ENCODE measurements at regions of chr7 and their contacts with region 1.

Region 1: DNA sequence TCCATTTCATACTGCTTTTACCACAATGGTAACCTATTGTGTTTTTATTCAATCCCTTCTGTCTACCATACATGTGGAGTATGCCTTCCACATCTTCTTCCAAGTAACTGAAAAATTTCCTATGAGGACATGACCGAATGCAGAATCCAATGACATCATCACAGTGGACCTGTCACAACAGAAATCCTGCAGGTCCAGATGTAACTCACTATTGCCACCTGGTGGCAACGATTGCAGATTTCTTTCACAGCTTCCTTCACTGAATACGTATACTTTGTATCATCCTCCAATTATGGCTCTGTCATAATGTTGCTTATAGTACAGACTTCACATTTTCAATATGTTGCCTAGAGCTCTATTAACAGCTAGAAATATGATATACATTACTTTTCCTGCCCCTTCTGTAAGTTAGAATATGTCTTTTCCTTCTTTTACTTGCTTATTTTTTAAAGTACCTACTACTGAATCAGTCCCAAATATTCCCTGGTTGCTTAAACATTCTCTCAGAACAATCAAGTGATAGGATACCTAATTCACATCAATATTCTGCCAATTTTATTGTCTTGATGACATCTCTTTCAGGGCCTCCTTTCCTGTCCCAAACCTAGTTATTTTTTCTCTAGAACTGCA is 45.4 kb downstream of the SLC13A1 start:
- DNase-seq: peak; percentile 34 to 81
- H3K4me3 ChIP-seq: no peak overlapping the region
- H3K27ac ChIP-seq: no peak overlapping the region
- H3K4me1 ChIP-seq: 0 out of 7 replicates have a peak, but pooled peaks cover 0 to 1% (median 0%) of the 10 kb centered on the region in 4 experiments
- H3K27me3 ChIP-seq: no peaks in the 10 kb centered on the region
- CTCF ChIP-seq: peak; percentile 27 to 85 (median 74)
- EP300 ChIP-seq: no peak
- POLR2A ChIP-seq: no peak
- RAD21 ChIP-seq: peak; percentile 91

Region 2: DNA sequence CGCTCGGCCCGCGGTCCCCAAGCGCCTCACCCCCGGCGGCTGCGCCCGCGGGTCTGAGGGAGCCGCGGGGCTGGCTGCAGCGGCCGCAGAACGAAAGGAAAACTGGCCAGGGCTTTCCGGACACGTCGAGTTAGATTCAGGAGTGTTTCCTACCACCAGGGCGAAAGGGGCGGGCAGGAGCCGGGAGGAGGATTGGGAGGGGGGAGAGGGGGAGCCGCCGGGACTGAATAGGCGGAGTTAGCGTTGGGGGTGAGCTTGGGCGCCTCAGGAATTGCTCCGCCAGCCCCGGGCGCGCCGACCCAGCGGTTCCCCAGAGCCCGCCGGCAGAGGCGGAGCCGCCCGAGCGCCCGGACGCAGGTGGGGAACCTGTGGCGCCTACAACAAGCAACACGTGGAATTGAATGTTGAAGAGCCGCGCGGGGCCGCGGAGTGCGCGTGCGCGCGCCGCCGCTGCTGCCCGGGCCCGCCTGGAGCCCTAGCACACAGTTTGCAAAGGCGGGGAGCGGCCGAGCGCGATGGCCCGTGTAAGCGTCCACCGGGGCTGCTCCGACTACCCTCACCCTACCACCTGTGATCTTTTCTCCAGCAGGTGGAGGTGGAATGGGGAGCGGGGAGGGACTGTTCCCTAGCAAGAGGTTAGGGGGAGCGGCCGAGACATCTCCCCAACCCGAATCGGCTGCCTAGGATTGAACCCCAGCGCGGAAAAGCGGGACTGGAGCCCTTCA is 267.8 kb before region 1 on chr7 and contains the start of gene CADPS2:
- CTCF ChIA-PET with region 1: interaction called, 10 read pairs
- POLR2A ChIA-PET with region 1: no interaction called
- DNase-seq: peak; percentile 59 to 87
- H3K4me3 ChIP-seq: peak within 1 kb of the TSS; percentile 79 to 86 (median 84)
- H3K27ac ChIP-seq: no peak within 1 kb of the TSS
- H3K4me1 ChIP-seq: peaks cover 0 to 9% (median 3%) of the 10 kb centered on the region in 4 experiments; a peak in 6 of 7 replicates
- H3K27me3 ChIP-seq: peaks cover 3 to 15% (median 8%) of the 10 kb centered on the region in 4 experiments
- CTCF ChIP-seq: peak in 1 of 3 experiments; percentile 8; a peak in 1 of 4 replicates
- EP300 ChIP-seq: peak in 1 of 2 experiments; percentile 23; a peak in 1 of 3 replicates
- POLR2A ChIP-seq: no peak; a peak in 2 of 3 replicates
- RAD21 ChIP-seq: no peak; a peak in 1 of 4 replicates
- total RNA-seq, gene CADPS2: 19.7 and 22.3 TPM in 2 replicates

Region 3: DNA sequence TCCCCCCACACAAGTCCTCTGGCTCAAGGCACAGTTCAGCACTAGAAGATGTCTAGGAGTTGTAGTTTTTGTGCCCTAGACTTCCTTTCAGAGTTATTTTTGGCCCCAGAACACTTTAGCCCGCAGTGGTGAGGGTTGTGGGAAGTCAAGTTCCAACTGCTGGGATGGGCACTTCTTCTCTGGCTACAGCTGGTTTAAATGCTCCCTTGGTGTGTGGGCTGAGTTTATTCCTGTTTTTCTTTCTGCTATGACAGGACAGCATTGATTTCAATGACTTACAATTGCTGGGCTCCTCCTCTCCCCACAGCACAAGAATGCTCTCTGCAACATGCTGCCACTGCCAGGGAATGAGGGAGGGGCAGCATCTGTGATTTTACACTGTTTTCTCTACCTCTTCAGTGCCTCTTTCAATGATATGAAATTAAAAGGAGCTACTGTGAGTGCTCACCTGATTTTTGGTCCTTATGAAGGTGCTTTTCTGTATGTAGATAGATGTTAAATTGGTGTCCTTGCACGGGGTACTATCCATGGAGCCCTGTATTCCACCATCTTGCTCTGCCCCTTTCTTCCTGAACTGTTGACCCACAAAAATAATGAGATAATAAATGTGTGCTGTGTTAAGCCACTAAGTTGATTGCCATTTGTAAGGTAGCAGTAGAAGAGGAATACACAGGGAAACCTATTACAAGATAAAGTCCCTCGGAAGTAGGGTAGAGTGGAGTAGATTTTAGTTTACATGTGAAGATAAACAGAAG is 10.9 kb before region 1 on chr7:
- CTCF ChIA-PET with region 1: interaction called, 20 read pairs
- POLR2A ChIA-PET with region 1: no interaction called
- DNase-seq: no peak
- H3K4me3 ChIP-seq: no peak overlapping the region
- H3K27ac ChIP-seq: no peak overlapping the region
- H3K4me1 ChIP-seq: no peaks in the 10 kb centered on the region
- H3K27me3 ChIP-seq: no peaks in the 10 kb centered on the region
- CTCF ChIP-seq: no peak
- EP300 ChIP-seq: no peak
- POLR2A ChIP-seq: no peak
- RAD21 ChIP-seq: no peak

Measured in H1 (cell line).